ENCODE measurements at regions of chr2 and their contacts with region 1.

Region 1: GRCh38 chr2:84925724-84926376 is 20.4 kb downstream of the TMSB10 start:
- DNase-seq: peak; percentile 94 to 97 (median 95)
- ATAC-seq: peak; percentile 77 to 89 (median 85)
- H3K4me3 ChIP-seq: peak overlapping the region in 10 of 12 donors; percentile 27 to 60 (median 39)
- H3K27ac ChIP-seq: peak overlapping the region in 11 of 12 donors; percentile 38 to 94 (median 85)
- H3K4me1 ChIP-seq: peaks cover 0 to 37% (median 20%) of the 10 kb centered on the region in 12 donors
- H3K27me3 ChIP-seq: no peaks in the 10 kb centered on the region
- CTCF ChIP-seq: peak; percentile 95 to 99 (median 98)
- POLR2A ChIP-seq: no peak

Region 2: DNA sequence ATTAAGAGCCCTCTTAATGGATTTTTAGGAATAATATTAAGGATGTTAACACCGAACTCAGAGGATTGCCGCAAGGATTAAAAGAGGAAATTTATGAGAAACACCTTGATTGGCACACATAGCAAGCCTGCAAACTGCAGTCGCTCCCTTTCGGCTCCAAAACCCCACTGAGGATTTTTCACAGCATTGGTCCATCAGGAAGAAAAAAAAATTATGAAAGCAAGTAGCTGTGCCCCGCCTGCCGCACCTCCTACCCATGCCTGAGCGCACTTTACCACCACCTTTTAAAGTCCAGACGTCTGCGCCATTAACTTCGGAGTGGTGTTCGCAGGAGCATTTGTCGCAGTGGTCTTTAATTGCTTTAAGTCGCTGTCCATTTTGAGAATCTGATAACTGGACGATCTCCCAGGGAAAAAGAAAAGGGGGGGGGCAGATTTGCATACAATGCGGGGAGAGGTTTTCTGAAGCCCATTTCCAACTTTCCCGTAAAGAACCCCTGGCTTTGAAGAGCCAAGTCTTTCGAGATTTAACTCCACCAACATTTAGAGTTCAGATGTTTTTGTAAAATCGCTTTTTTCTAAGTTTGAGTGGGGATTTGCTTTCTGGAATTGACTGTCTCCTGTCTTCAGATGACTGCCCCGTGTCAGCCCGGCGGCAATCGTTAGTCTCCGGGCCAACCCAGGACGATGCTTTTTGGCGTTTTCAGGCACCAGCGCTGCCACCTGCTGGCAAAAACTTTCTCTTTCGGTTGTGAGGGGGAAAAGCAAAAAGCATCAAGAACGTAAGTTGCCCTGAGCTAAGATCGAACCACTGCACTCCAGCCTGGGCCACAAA is 44.1 kb before region 1 on chr2:
- intact Hi-C with region 1: loop called in 2 of 10 experiments (anchors 2 to 5 kb)
- DNase-seq: peak; percentile 74 to 83 (median 79)
- ATAC-seq: peak; percentile 81 to 89 (median 84)
- H3K4me3 ChIP-seq: peak overlapping the region; percentile 27 to 70 (median 53)
- H3K27ac ChIP-seq: no peak overlapping the region
- H3K4me1 ChIP-seq: peaks cover 9 to 28% (median 19%) of the 10 kb centered on the region in 12 donors
- H3K27me3 ChIP-seq: peaks cover 0 to 25% (median 15%) of the 10 kb centered on the region in 9 donors
- CTCF ChIP-seq: peak; percentile 55 to 83 (median 71)
- POLR2A ChIP-seq: no peak

Region 3: GRCh38 chr2:84970868-84971509 is 45.1 kb after region 1 on chr2 and contains the start of gene KCMF1:
- intact Hi-C with region 1: loop called in 1 of 10 experiments (anchors 2 kb)
- DNase-seq: peak; percentile 83 to 93 (median 87)
- ATAC-seq: peak; percentile 59 to 80 (median 78)
- H3K4me3 ChIP-seq: peak within 1 kb of the TSS; percentile 74 to 98 (median 90)
- H3K27ac ChIP-seq: peak within 1 kb of the TSS; percentile 92 to 98 (median 96)
- H3K4me1 ChIP-seq: peaks cover 6 to 69% (median 39%) of the 10 kb centered on the region in 12 donors
- H3K27me3 ChIP-seq: no peaks in the 10 kb centered on the region
- CTCF ChIP-seq: no peak
- POLR2A ChIP-seq: no peak
- total RNA-seq, gene KCMF1: 58.9 to 104 (median 85.2) TPM

Region 4: GRCh38 chr2:85017411-85018048 is 91.7 kb after region 1 on chr2:
- intact Hi-C with region 1: loop called in 5 of 10 experiments (anchors 2 to 5 kb)
- DNase-seq: no peak
- ATAC-seq: no peak
- H3K4me3 ChIP-seq: no peak overlapping the region
- H3K27ac ChIP-seq: peak overlapping the region in 1 of 12 donors; percentile 1
- H3K4me1 ChIP-seq: peaks cover 7 to 64% (median 43%) of the 10 kb centered on the region in 12 donors
- H3K27me3 ChIP-seq: no peaks in the 10 kb centered on the region
- CTCF ChIP-seq: peak in 10 of 12 donors; percentile 12 to 54 (median 41)
- POLR2A ChIP-seq: no peak

Region 5: GRCh38 chr2:85308896-85309555 is 383.2 kb after region 1 on chr2:
- intact Hi-C with region 1: loop called in 1 of 10 experiments (anchors 10 kb)
- DNase-seq: peak; percentile 40 to 76 (median 61)
- ATAC-seq: peak; percentile 18 to 59 (median 48)
- H3K4me3 ChIP-seq: peak overlapping the region in 1 of 12 donors; percentile 29
- H3K27ac ChIP-seq: peak overlapping the region in 3 of 12 donors; percentile 5 to 42 (median 6)
- H3K4me1 ChIP-seq: peaks cover 0 to 38% (median 11%) of the 10 kb centered on the region in 12 donors
- H3K27me3 ChIP-seq: no peaks in the 10 kb centered on the region
- CTCF ChIP-seq: no peak
- POLR2A ChIP-seq: no peak